Dendritic cell treated with granulocyte-macrophage colony-stimulating factor and Interleukin-4, amounts not matched to agents 40 ng/mL and 50 ng/mL, for 4 days (primary cell): ENCODE measurements at regions of chr2 and their contacts with region 1.

Region 1: DNA sequence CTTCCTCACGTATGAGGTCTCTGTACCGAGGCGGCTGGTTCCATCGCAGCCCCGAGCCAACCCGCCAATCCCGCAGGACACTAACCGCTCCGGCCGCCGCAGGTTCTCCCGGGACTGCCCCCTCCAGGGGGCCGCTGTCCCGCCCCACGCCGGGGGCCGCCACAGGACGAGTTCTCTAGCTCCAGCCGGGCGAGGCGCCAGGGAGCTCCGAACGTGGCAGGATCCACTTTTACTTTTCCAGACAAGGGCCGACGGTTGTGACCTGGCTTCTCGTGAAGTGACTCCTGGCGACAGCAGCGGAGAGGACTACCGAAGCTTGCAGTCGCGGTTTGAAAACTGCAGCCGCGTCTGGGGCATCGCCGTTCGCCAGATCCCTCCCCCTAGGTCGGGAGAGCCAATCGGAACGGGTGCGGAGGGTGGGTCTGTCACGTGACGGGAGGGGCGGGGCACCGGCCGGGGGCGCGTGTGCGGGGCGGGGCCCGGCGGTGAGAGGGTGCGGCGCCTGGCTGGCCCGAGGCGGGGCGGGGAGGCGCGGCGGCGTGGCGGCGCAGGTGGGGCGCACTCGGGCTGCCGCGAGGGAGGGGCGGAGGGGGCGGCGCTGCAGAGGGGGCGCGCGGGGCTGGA is at the start of gene STK17B:
- H3K4me3 Mint-ChIP-seq: peak within 1 kb of the TSS; percentile 98
- H3K27ac Mint-ChIP-seq: peak within 1 kb of the TSS; percentile 99
- H3K4me1 Mint-ChIP-seq: peaks cover 13% of the 10 kb centered on the region
- H3K27me3 Mint-ChIP-seq: peaks cover 9% of the 10 kb centered on the region

Region 2: GRCh38 chr2:196195758-196196157 is 24.4 kb after region 1 on chr2:
- intact Hi-C with region 1: loop called (anchors 2 kb)
- H3K4me3 Mint-ChIP-seq: no peak overlapping the region
- H3K27ac Mint-ChIP-seq: no peak overlapping the region
- H3K4me1 Mint-ChIP-seq: no peaks in the 10 kb centered on the region
- H3K27me3 Mint-ChIP-seq: no peaks in the 10 kb centered on the region

Region 3: GRCh38 chr2:196205881-196206435 is 34.6 kb after region 1 on chr2:
- intact Hi-C with region 1: loop called (anchors 1 kb)
- H3K4me3 Mint-ChIP-seq: no peak overlapping the region
- H3K27ac Mint-ChIP-seq: no peak overlapping the region
- H3K4me1 Mint-ChIP-seq: peaks cover 19% of the 10 kb centered on the region
- H3K27me3 Mint-ChIP-seq: no peaks in the 10 kb centered on the region

Region 4: DNA sequence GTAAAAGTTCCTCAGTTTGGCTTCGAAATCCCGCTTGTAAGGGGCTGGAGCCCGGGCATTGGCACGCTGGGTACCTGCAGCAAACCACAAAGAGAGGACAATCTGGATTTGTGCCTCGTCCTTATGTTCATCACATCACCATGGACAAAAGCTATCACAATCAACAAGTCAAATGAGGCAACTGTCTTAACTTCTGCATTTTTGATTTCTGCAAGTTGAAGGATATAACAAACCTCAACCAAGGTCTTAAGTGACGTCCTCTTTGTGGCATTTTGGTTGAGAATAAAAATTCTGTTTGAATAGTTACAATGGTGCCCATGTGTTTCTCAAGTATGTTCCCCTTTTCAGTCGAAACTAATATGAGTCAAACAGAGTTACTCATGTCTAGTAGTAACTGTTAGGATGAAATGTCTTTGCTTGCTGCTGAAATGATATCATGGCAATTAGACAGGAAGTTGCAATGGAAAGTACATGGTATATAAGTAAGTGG is 70.8 kb after region 1 on chr2:
- intact Hi-C with region 1: loop called (anchors 1 kb)
- H3K4me3 Mint-ChIP-seq: no peak overlapping the region
- H3K27ac Mint-ChIP-seq: peak overlapping the region; percentile 92
- H3K4me1 Mint-ChIP-seq: peaks cover 62% of the 10 kb centered on the region
- H3K27me3 Mint-ChIP-seq: no peaks in the 10 kb centered on the region

Region 5: GRCh38 chr2:196263181-196263747 is 91.9 kb after region 1 on chr2:
- intact Hi-C with region 1: loop called (anchors 1 kb)
- H3K4me3 Mint-ChIP-seq: peak overlapping the region; percentile 32
- H3K27ac Mint-ChIP-seq: peak overlapping the region; percentile 89
- H3K4me1 Mint-ChIP-seq: peaks cover 38% of the 10 kb centered on the region
- H3K27me3 Mint-ChIP-seq: no peaks in the 10 kb centered on the region